ENCODE measurements at regions of chr13 and their contacts with region 1.

Region 1: DNA sequence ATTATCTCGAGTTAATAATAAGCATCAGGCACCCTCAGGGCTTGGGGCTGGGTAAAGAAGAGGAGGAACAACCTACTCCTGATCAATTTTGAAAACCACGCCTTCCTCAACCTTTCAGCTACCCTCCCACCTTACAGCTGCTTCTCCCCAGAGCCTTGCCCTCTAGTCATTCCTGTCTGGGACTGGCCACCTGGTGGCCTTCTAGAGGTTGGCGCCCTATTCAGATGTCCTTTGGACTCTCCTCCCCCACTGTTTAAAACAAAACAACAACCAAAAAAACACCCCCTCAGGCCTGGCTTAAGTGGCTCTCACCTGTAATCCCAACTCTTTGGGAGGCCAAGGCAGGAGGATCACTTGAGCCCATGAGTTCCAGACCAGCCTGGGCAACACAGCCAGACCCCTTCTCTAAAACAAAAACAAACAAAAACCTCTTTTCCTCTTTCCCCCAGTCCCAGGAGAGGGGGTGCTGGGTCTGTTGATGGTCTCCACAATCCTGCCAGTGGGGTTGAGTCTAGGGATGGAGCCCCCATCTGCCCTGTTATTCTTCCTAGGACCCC is 62.3 kb downstream of the CCDC70 start:
- DNase-seq: no peak
- H3K4me3 ChIP-seq: no peak overlapping the region
- H3K27ac ChIP-seq: no peak overlapping the region
- H3K4me1 ChIP-seq: no peaks in the 10 kb centered on the region
- H3K27me3 ChIP-seq: no peaks in the 10 kb centered on the region
- CTCF ChIP-seq: peak; percentile 47 to 57 (median 51)
- EP300 ChIP-seq: no peak
- POLR2A ChIP-seq: no peak
- RAD21 ChIP-seq: peak; percentile 37 to 46

Region 2: GRCh38 chr13:51911860-51912510 is 12.1 kb before region 1 on chr13:
- CTCF ChIA-PET with region 1: interaction called, 62 read pairs
- POLR2A ChIA-PET with region 1: interaction called, 3 read pairs
- DNase-seq: no peak
- H3K4me3 ChIP-seq: no peak overlapping the region
- H3K27ac ChIP-seq: no peak overlapping the region
- H3K4me1 ChIP-seq: no peaks in the 10 kb centered on the region; a peak in 2 of 7 replicates
- H3K27me3 ChIP-seq: no peaks in the 10 kb centered on the region
- CTCF ChIP-seq: no peak
- EP300 ChIP-seq: no peak
- POLR2A ChIP-seq: no peak
- RAD21 ChIP-seq: no peak